ENCODE measurements at regions of chr11 and their contacts with region 1.

Region 1: DNA sequence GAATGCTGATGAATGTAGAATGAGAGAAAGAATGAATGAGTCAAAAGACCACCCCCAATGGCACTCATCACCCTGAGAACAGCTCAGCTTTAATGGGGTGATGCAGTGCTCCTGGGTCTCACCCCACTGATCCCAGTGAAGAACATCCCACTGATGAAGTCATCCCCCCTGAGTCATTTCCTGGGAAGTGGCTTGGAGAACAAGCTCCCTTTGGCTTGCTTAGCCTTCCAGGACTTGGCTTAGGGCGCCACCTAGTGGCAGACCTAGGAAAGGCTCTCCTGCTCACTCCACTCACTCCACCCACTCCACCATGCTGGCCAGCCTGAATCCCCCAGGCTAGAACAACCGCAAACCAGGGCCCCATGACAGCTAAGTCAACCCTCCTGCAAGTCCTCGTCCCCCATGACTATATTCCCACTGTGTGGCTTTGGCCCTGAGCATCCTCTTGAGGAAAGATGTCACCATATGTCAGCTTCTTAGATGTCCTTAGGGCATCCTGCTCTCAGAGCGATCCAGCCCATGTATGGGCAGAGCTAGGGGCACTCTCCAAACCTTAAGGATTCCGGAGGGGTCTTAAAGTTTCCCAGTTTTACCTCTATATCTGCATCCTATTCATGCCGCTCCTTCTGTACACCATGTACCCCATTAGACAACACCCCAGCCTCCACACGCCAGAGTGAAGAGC is 17.8 kb upstream of the TMPRSS13 start:
- DNase-seq: peak; percentile 89
- ATAC-seq: peak; percentile 96

Region 2: DNA sequence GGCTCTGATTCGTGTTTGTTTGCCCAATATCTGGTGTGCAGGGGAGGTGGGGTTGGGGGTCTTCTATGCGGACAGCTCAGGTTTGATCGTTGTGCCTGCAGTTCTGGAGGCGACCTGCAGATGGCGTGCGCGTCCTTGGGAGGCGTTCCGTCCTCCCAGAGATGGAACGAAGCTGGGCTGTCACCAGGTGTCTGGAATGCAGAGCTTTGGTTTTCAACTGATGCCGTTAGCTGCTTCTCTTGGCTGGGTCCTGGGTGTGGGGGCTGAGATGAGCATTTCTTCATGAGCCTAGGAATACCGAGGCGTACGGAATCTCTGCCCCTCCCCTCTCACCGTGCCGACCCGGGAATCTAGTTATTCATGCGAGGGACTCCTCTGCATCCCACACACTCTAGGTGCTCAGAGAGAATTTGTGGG is 520.7 kb before region 1 on chr11:
- intact Hi-C with region 1: loop called (anchors 10 kb)
- DNase-seq: peak; percentile 83
- ATAC-seq: peak; percentile 45

Region 3: GRCh38 chr11:117817368-117818040 is 129.5 kb before region 1 on chr11:
- intact Hi-C with region 1: loop called (anchors 2 kb)
- DNase-seq: peak; percentile 88
- ATAC-seq: peak; percentile 67

Region 4: DNA sequence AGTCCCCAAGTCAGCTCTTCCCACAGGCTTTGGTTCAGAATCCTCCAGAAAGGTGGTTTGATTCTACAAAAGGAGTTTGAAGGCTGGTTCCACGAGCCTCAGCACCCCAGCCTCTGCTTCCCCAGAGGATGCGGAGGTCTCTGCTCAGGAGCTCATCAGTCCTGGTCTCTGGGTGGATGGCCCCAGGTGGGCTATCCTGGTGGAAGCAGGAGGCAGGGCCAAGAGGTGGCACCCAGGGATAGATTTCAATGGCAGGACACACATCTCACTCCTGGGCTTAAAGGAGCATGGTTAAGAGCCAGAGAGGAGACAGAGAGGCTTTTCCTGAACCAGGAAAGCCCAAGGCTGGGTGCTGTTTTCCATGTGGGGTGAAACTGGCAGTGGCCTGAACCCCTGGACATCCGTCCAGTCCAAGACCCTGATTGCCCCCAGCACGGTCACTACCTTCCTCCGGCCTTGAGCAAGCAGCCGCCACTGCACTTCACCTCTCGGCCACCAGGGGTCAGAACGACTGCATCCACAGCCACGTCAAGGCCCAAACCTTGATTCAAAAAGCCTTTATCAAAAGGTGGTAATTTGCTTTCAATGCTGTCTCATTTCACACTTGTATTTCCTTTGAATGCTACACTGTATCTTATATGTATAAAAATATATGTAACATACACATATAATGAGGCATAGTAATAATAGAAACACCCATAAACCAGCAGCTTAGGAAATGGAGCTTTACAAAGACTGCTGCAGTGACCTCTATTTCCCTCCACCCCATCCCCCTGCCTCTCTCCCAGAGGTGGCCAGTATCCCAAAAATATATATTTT is 103.1 kb before region 1 on chr11:
- intact Hi-C with region 1: loop called (anchors 1 kb)
- DNase-seq: peak; percentile 90
- ATAC-seq: peak; percentile 72

Region 5: GRCh38 chr11:117959438-117960149 is 12.6 kb after region 1 on chr11:
- intact Hi-C with region 1: no loop called
- DNase-seq: no peak
- ATAC-seq: peak; percentile 48

Region 6: DNA sequence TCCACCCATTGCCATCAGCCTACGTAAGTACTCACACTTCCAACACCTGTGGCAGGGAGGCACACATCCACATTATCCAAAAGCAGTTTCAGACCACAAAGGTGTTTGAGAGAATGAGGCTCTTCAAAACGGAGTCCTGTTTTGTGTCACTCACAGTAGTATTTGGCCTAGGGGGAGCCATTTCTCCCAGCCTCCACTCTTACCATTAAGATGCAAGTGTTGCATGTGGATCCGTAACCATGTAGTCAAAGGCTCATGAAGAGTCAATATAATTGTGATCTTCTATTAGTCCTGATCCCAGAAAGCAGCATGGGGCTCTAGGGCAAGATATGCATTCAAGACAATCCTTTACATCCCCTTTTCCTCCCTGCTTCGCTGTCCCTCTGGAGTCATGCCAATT is 80.7 kb after region 1 on chr11:
- intact Hi-C with region 1: no loop called
- DNase-seq: no peak
- ATAC-seq: no peak